ENCODE measurements at regions of chr11 and their contacts with region 1.

Region 1: DNA sequence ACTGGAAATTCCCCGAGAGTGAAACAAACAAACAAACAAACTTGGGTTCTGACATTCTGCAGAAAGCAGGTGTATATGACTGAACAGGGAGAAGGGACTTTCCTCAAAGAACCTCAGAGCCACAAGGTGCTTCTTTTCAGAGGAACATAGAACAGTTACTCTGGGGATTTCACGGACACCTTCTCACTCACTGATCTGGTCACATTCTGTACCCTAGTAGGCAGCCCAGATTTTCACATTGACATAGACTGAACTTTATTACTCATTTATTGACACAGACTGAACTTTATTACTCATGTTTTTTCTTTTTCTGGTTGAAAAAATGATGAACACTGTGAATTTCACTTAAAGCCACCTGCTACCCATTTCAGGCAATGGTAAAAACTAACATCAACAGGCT is 263.0 kb downstream of the OPCML start:
- DNase-seq: peak; percentile 33
- H3K4me3 Mint-ChIP-seq: no peak overlapping the region
- H3K27ac Mint-ChIP-seq: peak overlapping the region; percentile 47
- H3K4me1 Mint-ChIP-seq: peaks cover 50% of the 10 kb centered on the region
- H3K27me3 Mint-ChIP-seq: peaks cover 2% of the 10 kb centered on the region

Region 2: DNA sequence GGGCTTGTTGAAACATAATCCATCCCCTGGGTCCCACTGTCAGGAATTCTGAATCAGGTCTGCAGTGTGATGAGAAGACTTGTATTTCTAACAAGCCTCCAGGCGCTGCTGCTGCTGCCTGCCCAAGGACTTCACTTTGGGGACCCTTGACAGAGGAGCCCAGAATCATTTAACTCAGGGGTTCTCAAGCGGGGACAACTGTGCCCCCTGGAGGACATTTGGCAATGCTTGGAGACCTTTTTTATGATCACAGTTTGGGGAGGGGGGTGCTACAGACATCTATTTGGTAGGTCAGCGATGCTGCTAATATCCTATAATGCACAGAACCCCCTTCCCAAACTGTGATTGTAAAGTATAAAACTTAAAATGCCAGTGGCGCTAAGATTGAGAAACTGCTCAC is 49.7 kb before region 1 on chr11:
- intact Hi-C with region 1: loop called (anchors 5 kb)
- DNase-seq: no peak
- H3K4me3 Mint-ChIP-seq: no peak overlapping the region
- H3K27ac Mint-ChIP-seq: no peak overlapping the region
- H3K4me1 Mint-ChIP-seq: no peaks in the 10 kb centered on the region
- H3K27me3 Mint-ChIP-seq: no peaks in the 10 kb centered on the region

Region 3: DNA sequence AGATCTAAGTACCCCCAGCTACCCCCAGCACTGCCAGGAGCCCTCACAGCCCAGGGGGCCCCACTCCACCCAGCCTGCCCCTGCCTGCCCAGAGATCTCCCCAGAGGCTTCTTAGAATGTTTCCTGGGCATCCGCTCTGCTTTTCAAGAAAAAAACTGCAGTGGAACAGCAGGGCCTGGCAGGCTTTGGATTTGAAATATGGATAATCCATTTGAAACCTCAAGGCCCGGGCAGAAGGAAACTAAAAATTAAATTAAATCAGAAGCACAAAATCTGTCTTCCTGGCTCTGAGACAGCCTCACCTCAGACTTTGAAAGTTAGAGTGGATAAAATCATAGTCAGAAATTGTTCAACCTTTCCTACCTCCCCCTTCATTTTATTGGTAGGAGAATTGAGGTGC is 10.5 kb before region 1 on chr11:
- intact Hi-C with region 1: loop called (anchors 1 kb)
- DNase-seq: no peak
- H3K4me3 Mint-ChIP-seq: no peak overlapping the region
- H3K27ac Mint-ChIP-seq: peak overlapping the region; percentile 35
- H3K4me1 Mint-ChIP-seq: no peaks in the 10 kb centered on the region
- H3K27me3 Mint-ChIP-seq: peaks cover 4% of the 10 kb centered on the region